Activated B cell treated with CpG ODN at 0.5 μM for 24 hours (primary cell): ENCODE measurements at regions of chr14 and their contacts with region 1.

Region 1: GRCh38 chr14:65170768-65171507 is 68.6 kb upstream of the MAX start:
- DNase-seq: peak; percentile 52
- ATAC-seq: peak; percentile 56
- H3K4me3 Mint-ChIP-seq: peak overlapping the region; percentile 87
- H3K27ac Mint-ChIP-seq: peak overlapping the region; percentile 85
- H3K4me1 Mint-ChIP-seq: peaks cover 52% of the 10 kb centered on the region
- H3K27me3 Mint-ChIP-seq: no peaks in the 10 kb centered on the region
- CTCF ChIP-seq: no peak

Region 2: GRCh38 chr14:65102441-65103149 is 68.3 kb before region 1 on chr14 and contains the start of gene MAX:
- CTCF ChIA-PET with region 1: no interaction called
- POLR2A ChIA-PET with region 1: interaction called, 6 read pairs
- intact Hi-C with region 1: loop called (anchors 2 kb)
- DNase-seq: peak; percentile 92
- ATAC-seq: peak; percentile 86
- H3K4me3 Mint-ChIP-seq: peak within 1 kb of the TSS; percentile 89
- H3K27ac Mint-ChIP-seq: peak within 1 kb of the TSS; percentile 95
- H3K4me1 Mint-ChIP-seq: peaks cover 42% of the 10 kb centered on the region
- H3K27me3 Mint-ChIP-seq: no peaks in the 10 kb centered on the region
- CTCF ChIP-seq: no peak
- total RNA-seq, gene MAX: 115 and 116 TPM in 2 replicates

Region 3: DNA sequence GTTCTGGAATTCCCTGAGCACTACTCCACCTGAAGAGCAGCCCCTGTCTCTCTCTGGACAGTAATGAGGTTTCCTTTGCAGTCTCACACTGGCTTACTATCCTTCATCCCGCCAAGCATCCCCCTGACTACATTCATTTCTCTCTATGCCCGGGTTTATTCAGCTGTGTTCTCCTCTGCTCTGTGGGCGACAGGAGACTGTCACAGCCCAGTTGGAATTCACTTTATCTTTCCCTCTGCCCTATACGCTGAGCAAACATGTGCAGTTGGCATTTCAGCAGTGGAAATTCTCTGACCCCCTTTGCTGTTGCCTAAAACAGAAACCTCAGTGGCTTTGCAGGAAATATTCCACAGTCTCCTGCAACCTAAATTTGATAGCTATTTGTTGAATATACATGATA is 14.9 kb after region 1 on chr14:
- CTCF ChIA-PET with region 1: no interaction called
- POLR2A ChIA-PET with region 1: interaction called, 20 read pairs
- intact Hi-C with region 1: no loop called
- DNase-seq: no peak
- ATAC-seq: no peak
- H3K4me3 Mint-ChIP-seq: no peak overlapping the region
- H3K27ac Mint-ChIP-seq: no peak overlapping the region
- H3K4me1 Mint-ChIP-seq: peaks cover 20% of the 10 kb centered on the region
- H3K27me3 Mint-ChIP-seq: no peaks in the 10 kb centered on the region
- CTCF ChIP-seq: no peak

Region 4: GRCh38 chr14:65222440-65222858 is 51.5 kb after region 1 on chr14:
- CTCF ChIA-PET with region 1: interaction called, 9 read pairs
- POLR2A ChIA-PET with region 1: interaction called, 45 read pairs
- intact Hi-C with region 1: loop called (anchors 1 kb)
- DNase-seq: no peak
- ATAC-seq: peak; percentile 91
- H3K4me3 Mint-ChIP-seq: peak overlapping the region; percentile 11
- H3K27ac Mint-ChIP-seq: peak overlapping the region; percentile 18
- H3K4me1 Mint-ChIP-seq: peaks cover 62% of the 10 kb centered on the region
- H3K27me3 Mint-ChIP-seq: no peaks in the 10 kb centered on the region
- CTCF ChIP-seq: peak; percentile 58

Region 5: DNA sequence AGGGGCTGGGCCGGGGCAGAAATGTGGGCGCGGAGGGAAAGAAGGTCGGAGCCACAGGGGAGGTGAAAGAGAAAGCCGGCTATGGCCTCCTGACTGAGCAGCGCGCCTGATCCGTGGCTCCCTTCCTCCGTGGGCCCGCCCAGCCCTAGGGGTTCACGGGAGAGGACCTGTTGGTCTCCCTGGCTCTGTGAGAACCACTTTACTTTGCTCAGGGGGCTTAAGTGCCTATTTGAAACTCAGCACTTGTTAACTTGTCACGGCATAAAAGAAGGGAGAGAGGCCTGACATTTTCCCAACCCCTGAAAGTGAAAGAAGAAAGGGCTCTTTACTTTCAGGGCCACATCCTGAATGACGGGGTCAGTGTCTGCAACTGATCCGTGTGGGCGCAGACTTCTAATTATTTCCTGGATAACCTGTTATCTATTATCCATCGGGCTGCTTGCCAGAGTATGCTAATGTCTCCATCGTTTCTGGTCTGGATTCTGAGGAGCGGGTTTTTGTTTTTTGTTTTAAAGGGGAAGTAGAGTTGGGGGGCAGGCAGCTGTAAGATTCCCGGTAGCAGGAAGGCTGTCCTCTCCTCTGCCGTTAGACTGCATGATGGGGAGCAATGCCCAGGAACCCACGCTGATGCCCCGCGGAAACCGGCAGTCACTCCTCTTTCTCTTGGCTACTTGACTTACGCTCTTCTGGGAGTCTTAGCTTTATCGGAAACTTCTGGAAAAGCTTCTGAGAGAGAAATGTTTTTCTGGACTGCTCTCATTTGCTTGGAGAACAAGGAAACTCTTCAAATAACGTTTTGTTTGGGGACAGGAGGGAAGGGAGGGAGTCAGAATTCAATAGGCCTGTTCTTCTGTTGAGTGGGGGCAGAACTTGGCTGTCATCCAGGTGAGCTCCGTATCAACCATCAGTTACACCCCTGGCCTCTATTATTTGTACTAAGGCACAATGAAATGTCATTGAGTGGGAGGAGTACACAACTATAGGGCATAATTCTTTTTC is 59.1 kb after region 1 on chr14:
- CTCF ChIA-PET with region 1: interaction called, 9 read pairs
- POLR2A ChIA-PET with region 1: interaction called, 45 read pairs
- intact Hi-C with region 1: no loop called
- DNase-seq: no peak
- ATAC-seq: peak; percentile 32
- H3K4me3 Mint-ChIP-seq: peak overlapping the region; percentile 86
- H3K27ac Mint-ChIP-seq: peak overlapping the region; percentile 87
- H3K4me1 Mint-ChIP-seq: peaks cover 64% of the 10 kb centered on the region
- H3K27me3 Mint-ChIP-seq: no peaks in the 10 kb centered on the region
- CTCF ChIP-seq: no peak

Region 6: DNA sequence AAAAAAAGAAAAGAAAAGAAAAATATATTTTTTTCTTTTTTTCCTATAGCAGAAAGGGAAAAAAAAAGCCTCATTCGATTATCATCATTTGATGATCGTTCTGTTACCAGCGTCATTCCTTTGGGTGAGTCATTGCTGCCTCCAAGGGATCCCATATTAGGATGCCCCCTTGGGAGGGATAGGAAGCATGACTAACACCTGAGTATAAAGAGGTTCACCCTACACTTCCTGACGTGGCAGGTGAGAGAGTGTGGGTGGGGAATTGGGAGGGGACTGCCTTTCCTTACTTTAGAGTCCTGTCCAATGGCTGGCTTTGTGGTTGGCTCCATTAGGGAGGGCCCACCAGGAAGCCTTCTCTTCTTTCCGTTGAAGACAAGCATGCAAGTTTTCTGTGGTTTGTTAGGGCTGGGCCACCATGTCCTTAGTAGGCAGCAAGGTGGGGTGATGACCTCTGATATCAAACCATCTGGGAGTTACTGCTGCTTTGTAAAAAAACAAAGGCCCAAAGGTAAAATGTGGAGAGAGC is 185.5 kb after region 1 on chr14:
- CTCF ChIA-PET with region 1: interaction called, 4 read pairs
- POLR2A ChIA-PET with region 1: interaction called, 3 read pairs
- intact Hi-C with region 1: loop called (anchors 2 kb)
- DNase-seq: no peak
- ATAC-seq: no peak
- H3K4me3 Mint-ChIP-seq: no peak overlapping the region
- H3K27ac Mint-ChIP-seq: peak overlapping the region; percentile 71
- H3K4me1 Mint-ChIP-seq: peaks cover 87% of the 10 kb centered on the region
- H3K27me3 Mint-ChIP-seq: no peaks in the 10 kb centered on the region
- CTCF ChIP-seq: no peak

Region 7: DNA sequence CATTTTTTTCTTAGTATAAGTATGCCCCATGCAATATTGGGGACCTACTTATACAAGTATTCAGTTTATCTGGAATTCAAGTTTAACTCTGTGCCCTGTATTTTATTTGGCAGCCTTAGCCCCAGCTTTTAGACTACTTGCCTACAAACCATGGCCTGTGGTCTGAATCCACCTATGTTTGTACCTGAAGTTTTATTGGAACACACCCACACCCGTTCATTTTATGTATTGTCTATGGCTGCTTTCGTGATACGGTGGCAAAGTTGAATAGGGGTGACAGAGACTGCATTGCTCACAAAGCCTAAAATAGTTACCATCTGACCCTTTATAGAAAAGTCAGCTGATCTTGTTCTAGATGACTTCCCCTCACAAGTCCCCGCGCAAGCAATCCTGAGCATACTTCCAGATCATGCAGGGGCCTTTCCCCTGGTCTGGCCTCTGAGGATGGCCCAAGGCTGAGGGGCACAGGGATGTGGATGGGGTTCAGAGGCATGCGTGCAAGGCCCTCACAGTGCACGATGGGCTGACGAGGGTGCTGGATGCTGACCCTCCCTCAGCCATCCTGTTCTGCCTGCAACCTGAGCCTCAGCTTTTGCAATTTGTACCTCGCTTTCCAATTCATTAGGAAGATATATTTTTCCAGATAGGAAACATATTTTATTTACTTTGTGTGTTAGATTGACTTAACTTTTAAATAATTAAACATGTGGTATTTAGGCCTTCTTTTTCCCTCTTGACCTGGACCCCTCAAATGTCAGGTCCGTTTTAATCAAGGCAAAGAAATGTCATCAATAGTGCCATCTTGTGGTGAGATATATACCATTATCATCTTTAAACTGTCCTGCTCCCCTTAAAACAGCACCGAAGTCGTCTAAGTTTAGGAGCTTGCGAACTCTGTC is 788.0 kb after region 1 on chr14:
- CTCF ChIA-PET with region 1: interaction called, 53 read pairs
- POLR2A ChIA-PET with region 1: interaction called, 7 read pairs
- intact Hi-C with region 1: no loop called
- DNase-seq: no peak
- ATAC-seq: peak; percentile 57
- H3K4me3 Mint-ChIP-seq: no peak overlapping the region
- H3K27ac Mint-ChIP-seq: no peak overlapping the region
- H3K4me1 Mint-ChIP-seq: no peaks in the 10 kb centered on the region
- H3K27me3 Mint-ChIP-seq: peaks cover 20% of the 10 kb centered on the region
- CTCF ChIP-seq: no peak